Sigmoid colon (tissue), 7 donors: ENCODE measurements at regions of chr14 and their contacts with region 1.

Region 1: GRCh38 chr14:104826189-104826860 is 25.4 kb downstream of the ZBTB42 start:
- DNase-seq: peak; percentile 94
- H3K4me3 ChIP-seq: peak overlapping the region; percentile 36 to 69 (median 55)
- H3K27ac ChIP-seq: peak overlapping the region; percentile 54 to 68 (median 64)
- H3K4me1 ChIP-seq: peaks cover 0 to 29% (median 26%) of the 10 kb centered on the region in 4 donors
- H3K27me3 ChIP-seq: peaks cover 0 to 8% (median 0%) of the 10 kb centered on the region in 3 donors
- CTCF ChIP-seq: peak; percentile 11 to 88 (median 70)
- EP300 ChIP-seq: no peak
- POLR2A ChIP-seq: no peak

Region 2: DNA sequence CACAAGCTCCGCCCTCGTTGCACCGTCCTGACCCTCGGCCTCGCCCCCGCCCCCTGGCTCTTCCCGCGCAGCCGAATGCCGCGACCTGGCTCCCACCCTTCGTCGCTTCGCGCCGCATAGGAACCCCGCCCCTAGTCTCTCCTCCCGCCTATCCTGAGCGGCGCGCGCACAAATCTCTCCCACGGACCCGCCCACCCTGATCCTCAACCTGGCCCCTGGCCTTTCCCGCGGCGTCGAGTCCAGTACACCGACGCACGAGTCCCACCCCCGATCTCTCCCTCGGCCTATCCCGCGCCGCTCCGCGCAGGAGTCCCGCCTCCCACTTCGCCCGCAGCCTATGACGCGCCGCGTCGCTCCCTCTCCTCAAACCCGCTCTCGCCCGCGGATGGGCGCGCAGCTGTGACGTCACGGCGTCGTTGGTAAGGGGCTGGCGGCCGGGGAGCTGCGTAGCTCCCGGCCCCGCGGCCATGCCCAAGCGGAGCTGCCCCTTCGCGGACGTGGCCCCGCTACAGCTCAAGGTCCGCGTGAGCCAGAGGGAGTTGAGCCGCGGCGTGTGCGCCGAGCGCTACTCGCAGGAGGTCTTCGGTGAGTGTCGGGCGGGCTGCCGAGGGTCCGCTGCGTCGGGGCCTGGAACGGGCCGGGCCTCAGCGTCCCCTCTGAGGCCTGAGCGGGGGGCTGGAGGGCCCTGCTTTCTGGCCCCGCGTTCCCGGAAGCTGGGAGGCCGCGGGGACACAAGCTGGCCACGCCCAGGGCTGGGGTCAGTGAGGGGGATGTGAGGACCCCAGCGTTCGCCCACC is 73.4 kb before region 1 on chr14 and contains the start of gene SIVA1:
- intact Hi-C with region 1: loop called (anchors 5 kb)
- DNase-seq: peak; percentile 100
- H3K4me3 ChIP-seq: peak within 1 kb of the TSS; percentile 65 to 99 (median 92)
- H3K27ac ChIP-seq: peak within 1 kb of the TSS; percentile 82 to 90 (median 86)
- H3K4me1 ChIP-seq: peaks cover 2 to 35% (median 30%) of the 10 kb centered on the region in 4 donors
- H3K27me3 ChIP-seq: no peaks in the 10 kb centered on the region
- CTCF ChIP-seq: no peak
- EP300 ChIP-seq: no peak
- POLR2A ChIP-seq: peak; percentile 74 to 86
- total RNA-seq, gene SIVA1: 235 to 512 (median 367) TPM

Region 3: DNA sequence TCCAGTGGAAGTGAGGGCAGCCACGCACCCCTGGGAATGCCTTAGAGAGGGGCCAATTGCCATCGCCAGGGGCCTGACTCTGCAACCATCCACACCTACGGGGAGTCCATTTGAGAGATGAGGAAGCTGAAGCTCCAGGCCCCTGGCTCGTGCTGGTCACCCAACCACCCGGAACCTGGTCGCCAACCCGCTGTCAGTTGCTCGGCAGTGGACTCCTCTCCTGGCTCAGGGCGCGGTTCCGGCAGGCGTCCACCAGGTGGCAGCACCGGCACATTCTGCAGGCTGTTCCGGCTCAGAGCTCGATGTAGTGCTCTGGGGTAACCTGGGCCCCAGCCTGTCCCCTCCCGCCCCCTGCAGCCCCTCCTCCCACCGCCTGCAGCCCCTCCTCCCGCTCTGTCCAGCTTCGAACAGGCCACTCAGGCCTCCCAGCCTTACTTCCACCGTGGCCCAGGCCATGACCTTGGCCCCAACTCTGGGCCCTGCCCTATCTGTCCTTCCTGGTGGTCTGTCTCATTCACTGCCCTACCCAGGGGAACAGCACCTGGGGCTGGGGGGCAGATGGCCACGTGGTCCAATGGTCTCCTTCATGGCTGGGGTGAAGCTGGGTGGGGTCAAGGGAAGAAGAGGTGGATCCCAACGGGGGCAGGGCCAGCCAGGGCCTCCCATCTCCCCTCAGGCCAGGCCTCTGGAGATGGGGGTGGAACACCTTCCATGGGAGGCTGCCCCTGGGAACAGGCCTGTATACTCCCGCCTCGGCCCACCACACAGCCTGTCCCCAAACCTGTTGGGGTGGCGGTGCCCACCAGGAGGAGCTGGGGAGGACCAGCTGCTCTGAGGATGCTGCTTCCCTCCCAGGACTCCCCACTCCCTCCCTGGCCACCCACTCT is 57.6 kb before region 1 on chr14:
- intact Hi-C with region 1: loop called (anchors 1 kb)
- DNase-seq: peak; percentile 94
- H3K4me3 ChIP-seq: no peak overlapping the region
- H3K27ac ChIP-seq: peak overlapping the region; percentile 12 to 55 (median 48)
- H3K4me1 ChIP-seq: peaks cover 0 to 10% (median 9%) of the 10 kb centered on the region in 4 donors
- H3K27me3 ChIP-seq: no peaks in the 10 kb centered on the region
- CTCF ChIP-seq: peak; percentile 75 to 91 (median 80)
- EP300 ChIP-seq: no peak
- POLR2A ChIP-seq: no peak

Region 4: GRCh38 chr14:104865644-104866441 is 39.5 kb after region 1 on chr14:
- intact Hi-C with region 1: loop called (anchors 2 kb)
- DNase-seq: peak; percentile 85
- H3K4me3 ChIP-seq: peak overlapping the region; percentile 57 to 89 (median 71)
- H3K27ac ChIP-seq: peak overlapping the region; percentile 67 to 80 (median 75)
- H3K4me1 ChIP-seq: peaks cover 0 to 35% (median 26%) of the 10 kb centered on the region in 4 donors
- H3K27me3 ChIP-seq: peaks cover 0 to 9% (median 0%) of the 10 kb centered on the region in 3 donors
- CTCF ChIP-seq: no peak
- EP300 ChIP-seq: no peak
- POLR2A ChIP-seq: peak in 1 of 2 donors; percentile 24